ENCODE measurements at regions of chr13 and their contacts with region 1.

Region 1: GRCh38 chr13:45047394-45048310 is 58.3 kb downstream of the GPALPP1 start:
- DNase-seq: peak; percentile 66
- ATAC-seq: peak; percentile 88

Region 2: DNA sequence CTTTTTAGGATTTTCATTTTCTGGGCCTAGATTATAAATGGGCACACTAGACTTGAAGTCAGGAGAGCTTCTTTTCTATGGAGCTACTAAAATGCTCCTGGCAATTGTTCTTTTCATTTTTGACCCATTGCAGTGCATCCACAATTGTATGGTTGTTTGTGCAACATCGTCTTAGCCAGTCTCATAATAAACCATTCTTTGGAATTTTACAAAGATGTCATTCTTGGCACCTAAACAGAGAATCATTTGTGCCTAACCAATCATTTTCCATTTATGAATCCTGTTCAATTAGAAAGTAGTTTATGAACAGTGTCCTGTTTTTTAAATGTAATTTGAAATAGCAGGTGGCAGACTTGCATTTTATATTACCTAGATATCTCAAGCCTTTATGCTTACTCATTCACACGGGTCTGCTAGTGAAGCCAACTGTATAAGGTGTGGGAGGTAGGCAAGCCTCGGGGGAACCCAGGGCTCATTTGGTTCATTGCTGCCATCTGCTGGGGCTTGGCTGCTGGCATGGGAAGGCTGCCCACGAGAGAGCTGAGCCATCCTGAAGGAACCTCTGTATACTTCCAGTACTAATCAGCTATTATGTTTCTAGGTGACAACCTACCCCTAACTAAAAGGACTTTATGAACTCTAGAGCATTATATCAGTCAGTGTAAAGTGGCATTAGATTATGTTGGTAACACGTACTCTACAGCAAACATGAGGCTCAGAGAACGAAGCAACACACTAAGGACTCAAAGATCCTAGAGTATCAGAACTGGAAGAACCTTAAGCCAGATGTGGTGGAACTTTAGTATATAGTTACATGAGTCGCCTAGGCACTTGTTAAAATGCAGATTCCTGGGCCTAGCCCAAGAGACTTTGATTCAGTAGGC is 233.3 kb after region 1 on chr13:
- intact Hi-C with region 1: loop called (anchors 5 kb)
- DNase-seq: peak; percentile 67
- ATAC-seq: peak; percentile 98

Region 3: DNA sequence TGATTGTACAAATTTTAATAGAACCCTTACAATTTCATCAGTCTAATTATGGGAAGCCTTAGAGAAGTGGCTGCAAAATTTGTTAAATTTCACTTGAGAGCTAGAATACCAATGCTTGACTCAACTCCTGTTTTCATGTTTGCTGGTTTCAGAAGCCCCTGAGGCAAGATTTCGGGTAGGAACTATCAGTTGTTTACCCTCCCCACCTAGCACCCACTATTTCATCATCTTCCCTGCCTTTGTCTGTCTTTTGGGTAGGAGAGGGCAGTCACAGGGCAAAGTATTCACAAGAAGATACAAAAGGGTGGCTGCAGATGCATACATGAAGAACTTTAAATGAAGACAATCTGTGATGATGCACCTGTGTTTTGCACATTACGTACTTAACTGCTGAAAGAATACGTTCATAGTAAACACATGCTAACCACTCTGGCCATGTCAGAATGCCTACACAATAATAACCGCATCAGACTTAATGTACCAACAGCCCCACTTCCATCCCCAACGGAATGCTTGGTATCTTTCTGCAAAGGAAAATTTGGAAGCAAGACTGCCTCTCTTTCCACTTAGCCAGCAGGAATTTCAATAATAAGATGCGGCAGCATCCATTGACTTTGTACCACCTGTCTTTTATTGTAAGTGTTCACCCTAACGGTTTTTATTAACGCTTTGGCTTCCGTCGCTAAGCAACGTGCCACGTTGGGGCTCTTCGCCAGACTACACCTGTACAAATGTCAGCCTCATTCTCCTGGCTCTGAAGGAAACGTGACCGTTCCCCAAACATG is 262.9 kb after region 1 on chr13:
- intact Hi-C with region 1: loop called (anchors 2 kb)
- DNase-seq: no peak
- ATAC-seq: no peak